ENCODE measurements at regions of chr11 and their contacts with region 1.

Region 1: GRCh38 chr11:95182397-95182796 is 48.6 kb downstream of the SESN3 start:
- DNase-seq: no peak
- H3K4me3 Mint-ChIP-seq: no peak overlapping the region
- H3K27ac Mint-ChIP-seq: peak overlapping the region; percentile 59
- H3K4me1 Mint-ChIP-seq: peaks cover 25% of the 10 kb centered on the region
- H3K27me3 Mint-ChIP-seq: no peaks in the 10 kb centered on the region

Region 2: DNA sequence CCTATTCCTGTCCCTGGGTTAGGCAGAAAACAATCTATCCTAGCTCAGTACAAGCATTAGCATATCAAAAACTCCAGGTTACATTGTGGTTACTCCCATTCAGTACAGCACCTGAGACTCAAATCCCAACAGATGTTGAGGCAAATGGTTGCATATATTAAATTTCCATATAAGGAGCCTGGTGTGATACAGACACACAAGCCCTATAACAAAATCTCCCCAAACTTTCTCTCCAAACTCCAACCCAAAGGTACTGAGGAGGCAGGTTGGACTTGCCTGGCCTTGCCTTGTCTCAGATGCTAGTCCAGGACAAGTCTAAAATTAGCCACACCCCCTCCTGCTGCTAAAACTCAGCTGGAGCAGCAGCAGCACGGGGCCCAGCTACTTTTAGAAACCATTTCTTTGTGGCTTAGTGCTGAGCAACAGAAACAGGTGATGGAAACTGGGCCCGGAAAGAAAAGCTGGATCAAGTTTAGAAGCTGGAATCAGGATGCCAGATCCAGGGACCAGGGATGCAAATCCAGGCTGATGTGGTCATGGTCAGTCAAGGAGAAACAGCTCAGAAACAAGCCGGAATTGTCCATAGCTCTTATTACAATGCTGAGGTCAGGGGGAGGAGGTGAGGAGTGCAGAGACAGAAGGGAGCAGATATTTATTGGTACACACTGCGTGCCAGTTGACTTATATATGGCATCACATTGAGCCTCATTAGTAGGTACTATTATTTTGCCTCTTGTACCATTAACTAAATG is 487.9 kb before region 1 on chr11:
- CTCF ChIA-PET with region 1: no interaction called
- POLR2A ChIA-PET with region 1: no interaction called
- intact Hi-C with region 1: no loop called
- DNase-seq: no peak
- H3K4me3 Mint-ChIP-seq: no peak overlapping the region
- H3K27ac Mint-ChIP-seq: no peak overlapping the region
- H3K4me1 Mint-ChIP-seq: no peaks in the 10 kb centered on the region
- H3K27me3 Mint-ChIP-seq: peaks cover 20% of the 10 kb centered on the region

Region 3: DNA sequence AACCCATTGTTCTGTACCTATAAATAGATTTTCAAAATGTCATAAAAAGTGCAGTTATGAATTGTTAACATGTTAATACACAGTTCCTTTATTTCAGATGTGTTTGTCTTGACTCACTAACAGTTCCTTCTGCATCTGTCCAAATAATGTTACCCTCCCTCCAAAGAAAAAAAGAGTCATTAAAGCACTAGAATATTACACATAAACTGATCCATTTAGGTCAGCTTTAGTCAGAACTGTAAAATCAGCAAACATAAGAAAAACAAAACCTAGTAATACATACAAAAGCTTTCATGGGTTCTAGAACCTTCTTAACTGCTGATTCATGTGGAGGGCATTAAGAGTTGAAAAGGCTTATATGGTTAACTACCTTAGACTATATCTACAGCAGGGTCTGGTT is 16.8 kb before region 1 on chr11:
- CTCF ChIA-PET with region 1: no interaction called
- POLR2A ChIA-PET with region 1: no interaction called
- intact Hi-C with region 1: no loop called
- DNase-seq: no peak
- H3K4me3 Mint-ChIP-seq: no peak overlapping the region
- H3K27ac Mint-ChIP-seq: peak overlapping the region; percentile 56
- H3K4me1 Mint-ChIP-seq: peaks cover 23% of the 10 kb centered on the region
- H3K27me3 Mint-ChIP-seq: no peaks in the 10 kb centered on the region

Region 4: DNA sequence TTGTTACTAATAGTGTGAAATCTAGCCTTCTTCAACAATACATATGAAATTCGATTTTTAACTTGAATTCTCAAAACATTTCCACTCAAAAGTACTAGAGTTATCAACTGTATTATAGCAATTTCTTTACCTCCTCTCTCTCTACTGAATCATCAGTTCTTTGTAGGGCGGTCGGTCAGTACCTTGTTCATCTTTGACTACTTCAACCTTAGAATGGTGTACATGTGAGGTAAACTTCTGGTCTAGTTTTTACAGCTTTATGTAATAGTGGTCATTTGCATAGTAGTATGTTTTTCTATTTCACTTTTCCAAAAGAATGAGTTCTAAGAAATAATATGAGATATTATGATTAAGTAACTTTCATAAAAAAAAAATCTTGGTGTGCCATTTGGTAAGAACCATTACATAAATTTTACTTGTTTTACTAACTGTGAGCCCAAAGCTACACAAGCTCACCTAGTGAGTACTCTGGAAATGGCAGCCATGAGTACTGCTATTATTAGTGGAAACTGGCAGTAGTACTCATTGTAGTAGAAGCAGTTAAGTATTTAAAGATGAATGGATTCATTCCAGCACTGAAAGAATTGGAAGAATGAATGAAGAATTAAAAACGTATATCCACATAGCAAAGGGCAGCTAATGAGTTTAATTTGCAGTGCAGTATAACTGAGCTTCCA is 18.5 kb after region 1 on chr11:
- CTCF ChIA-PET with region 1: interaction called, 7 read pairs
- POLR2A ChIA-PET with region 1: no interaction called
- intact Hi-C with region 1: loop called (anchors 2 kb)
- DNase-seq: no peak
- H3K4me3 Mint-ChIP-seq: no peak overlapping the region
- H3K27ac Mint-ChIP-seq: no peak overlapping the region
- H3K4me1 Mint-ChIP-seq: peaks cover 66% of the 10 kb centered on the region
- H3K27me3 Mint-ChIP-seq: no peaks in the 10 kb centered on the region

Region 5: GRCh38 chr11:95279921-95280868 is 97.8 kb after region 1 on chr11:
- CTCF ChIA-PET with region 1: no interaction called
- POLR2A ChIA-PET with region 1: no interaction called
- intact Hi-C with region 1: no loop called
- DNase-seq: no peak
- H3K4me3 Mint-ChIP-seq: no peak overlapping the region
- H3K27ac Mint-ChIP-seq: no peak overlapping the region
- H3K4me1 Mint-ChIP-seq: peaks cover 10% of the 10 kb centered on the region
- H3K27me3 Mint-ChIP-seq: no peaks in the 10 kb centered on the region

Region 6: GRCh38 chr11:95429376-95429907 is 247.0 kb after region 1 on chr11:
- CTCF ChIA-PET with region 1: no interaction called
- POLR2A ChIA-PET with region 1: no interaction called
- intact Hi-C with region 1: no loop called
- DNase-seq: no peak
- H3K4me3 Mint-ChIP-seq: no peak overlapping the region
- H3K27ac Mint-ChIP-seq: no peak overlapping the region
- H3K4me1 Mint-ChIP-seq: peaks cover 2% of the 10 kb centered on the region
- H3K27me3 Mint-ChIP-seq: peaks cover 2% of the 10 kb centered on the region